Endothelial cell of umbilical vein (primary cell): ENCODE measurements at regions of chr10 and their contacts with region 1.

Region 1: GRCh38 chr10:102120142-102120990 is at the start of gene LDB1:
- DNase-seq: peak; percentile 88
- H3K4me3 ChIP-seq: peak within 1 kb of the TSS; percentile 53 to 98 (median 57)
- H3K27ac ChIP-seq: peak within 1 kb of the TSS; percentile 70
- H3K4me1 ChIP-seq: peaks cover 45% of the 10 kb centered on the region
- H3K27me3 ChIP-seq: no peaks in the 10 kb centered on the region
- CTCF ChIP-seq: no peak
- POLR2A ChIP-seq: no peak
- total RNA-seq, gene LDB1: 65.7 and 67.7 TPM in 2 replicates

Region 2: DNA sequence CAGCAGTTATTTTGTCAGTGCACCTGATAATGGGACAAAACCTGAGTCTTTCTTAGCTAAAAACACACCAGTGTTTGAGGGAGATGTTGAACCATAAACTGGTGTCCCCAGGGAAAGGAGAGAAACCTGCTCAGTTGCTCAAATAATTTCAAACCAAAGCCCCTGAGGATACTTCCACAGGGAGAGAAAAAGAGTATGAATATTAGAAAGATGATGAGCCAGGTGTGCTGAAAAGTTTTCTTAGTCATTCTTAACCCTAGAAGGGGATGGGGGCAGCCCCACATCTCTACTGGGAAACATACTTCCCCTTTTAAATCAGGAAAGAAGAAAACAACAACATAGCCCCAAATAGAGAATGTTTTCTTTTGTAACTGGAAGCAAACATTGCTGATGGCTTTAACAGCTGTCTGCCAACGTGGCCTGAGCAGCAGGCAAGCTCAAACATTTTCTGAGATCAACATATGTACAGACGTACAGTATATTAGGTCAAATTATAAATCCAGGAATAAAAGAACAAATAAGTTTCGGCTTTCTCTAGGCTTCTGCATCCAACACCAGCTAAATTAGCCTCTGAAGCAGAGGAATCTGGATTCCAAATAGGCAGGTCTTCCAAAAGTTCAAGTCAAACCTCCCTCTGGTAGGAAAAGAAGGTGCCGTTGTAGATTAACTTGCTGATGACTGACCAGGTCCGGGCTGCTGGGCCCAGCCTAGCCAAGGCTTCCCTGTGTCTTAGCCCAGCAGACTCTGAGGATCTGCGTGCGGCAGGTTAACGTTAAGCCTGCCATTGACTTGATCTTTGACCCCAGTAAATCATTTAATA is 394.9 kb before region 1 on chr10:
- CTCF ChIA-PET with region 1: no interaction called
- POLR2A ChIA-PET with region 1: no interaction called
- dilution Hi-C with region 1: no loop called
- intact Hi-C with region 1: no loop called
- DNase-seq: no peak
- H3K4me3 ChIP-seq: no peak overlapping the region
- H3K27ac ChIP-seq: no peak overlapping the region
- H3K4me1 ChIP-seq: no peaks in the 10 kb centered on the region
- H3K27me3 ChIP-seq: peaks cover 9 to 21% of the 10 kb centered on the region in 2 experiments
- CTCF ChIP-seq: no peak
- POLR2A ChIP-seq: no peak

Region 3: GRCh38 chr10:102085336-102085735 is 35.0 kb before region 1 on chr10:
- CTCF ChIA-PET with region 1: no interaction called
- POLR2A ChIA-PET with region 1: interaction called, 10 read pairs
- dilution Hi-C with region 1: no loop called
- intact Hi-C with region 1: no loop called
- DNase-seq: no peak
- H3K4me3 ChIP-seq: no peak overlapping the region
- H3K27ac ChIP-seq: no peak overlapping the region
- H3K4me1 ChIP-seq: no peaks in the 10 kb centered on the region
- H3K27me3 ChIP-seq: no peaks in the 10 kb centered on the region
- CTCF ChIP-seq: no peak
- POLR2A ChIP-seq: no peak

Region 4: DNA sequence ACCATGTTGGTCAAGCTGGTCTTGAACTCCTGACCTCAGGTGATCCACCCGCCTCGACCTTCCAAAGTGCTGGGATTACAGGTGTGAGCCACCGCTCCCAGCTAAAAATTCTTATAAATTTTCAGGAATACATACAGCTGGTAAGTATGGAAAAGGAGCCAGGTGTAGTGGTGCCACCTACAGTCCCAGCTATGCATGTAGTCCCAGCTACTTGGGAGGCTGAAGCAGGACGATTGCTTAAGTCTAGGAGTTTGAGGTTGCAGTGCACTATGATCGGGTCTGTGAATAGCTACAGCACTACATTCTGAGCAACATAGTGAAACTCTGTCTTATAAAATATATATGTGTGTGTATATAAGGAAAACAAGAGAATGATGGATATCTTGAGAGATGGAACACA is 19.2 kb before region 1 on chr10:
- CTCF ChIA-PET with region 1: interaction called, 12 read pairs
- POLR2A ChIA-PET with region 1: interaction called, 11 read pairs
- dilution Hi-C with region 1: no loop called
- intact Hi-C with region 1: no loop called
- DNase-seq: no peak
- H3K4me3 ChIP-seq: no peak overlapping the region
- H3K27ac ChIP-seq: no peak overlapping the region
- H3K4me1 ChIP-seq: peaks cover 9% of the 10 kb centered on the region
- H3K27me3 ChIP-seq: no peaks in the 10 kb centered on the region
- CTCF ChIP-seq: no peak
- POLR2A ChIP-seq: no peak

Region 5: GRCh38 chr10:102358712-102359382 is 238.5 kb after region 1 on chr10:
- CTCF ChIA-PET with region 1: no interaction called
- POLR2A ChIA-PET with region 1: no interaction called
- dilution Hi-C with region 1: no loop called
- intact Hi-C with region 1: no loop called
- DNase-seq: no peak
- H3K4me3 ChIP-seq: no peak overlapping the region
- H3K27ac ChIP-seq: no peak overlapping the region
- H3K4me1 ChIP-seq: no peaks in the 10 kb centered on the region
- H3K27me3 ChIP-seq: no peaks in the 10 kb centered on the region
- CTCF ChIP-seq: no peak
- POLR2A ChIP-seq: no peak